HCT116 (cell line): ENCODE measurements at regions of chr20 and their contacts with region 1.

Region 1: GRCh38 chr20:59912609-59913008 is 20.8 kb downstream of the SYCP2 start:
- DNase-seq: no peak
- ATAC-seq: no peak
- H3K4me3 ChIP-seq: no peak overlapping the region
- H3K27ac ChIP-seq: no peak overlapping the region
- H3K4me1 ChIP-seq: no peaks in the 10 kb centered on the region
- H3K27me3 ChIP-seq: peaks cover 34% of the 10 kb centered on the region
- CTCF ChIP-seq: no peak
- POLR2A ChIP-seq: no peak
- RAD21 ChIP-seq: no peak

Region 2: GRCh38 chr20:59873409-59873808 is 39.2 kb before region 1 on chr20:
- CTCF ChIA-PET with region 1: no interaction called
- POLR2A ChIA-PET with region 1: no interaction called
- RAD21 ChIA-PET with region 1: no interaction called
- intact Hi-C with region 1: no loop called
- DNase-seq: no peak
- ATAC-seq: no peak
- H3K4me3 ChIP-seq: no peak overlapping the region
- H3K27ac ChIP-seq: no peak overlapping the region
- H3K4me1 ChIP-seq: no peaks in the 10 kb centered on the region
- H3K27me3 ChIP-seq: peaks cover 11% of the 10 kb centered on the region
- CTCF ChIP-seq: no peak
- POLR2A ChIP-seq: no peak
- RAD21 ChIP-seq: no peak

Region 3: DNA sequence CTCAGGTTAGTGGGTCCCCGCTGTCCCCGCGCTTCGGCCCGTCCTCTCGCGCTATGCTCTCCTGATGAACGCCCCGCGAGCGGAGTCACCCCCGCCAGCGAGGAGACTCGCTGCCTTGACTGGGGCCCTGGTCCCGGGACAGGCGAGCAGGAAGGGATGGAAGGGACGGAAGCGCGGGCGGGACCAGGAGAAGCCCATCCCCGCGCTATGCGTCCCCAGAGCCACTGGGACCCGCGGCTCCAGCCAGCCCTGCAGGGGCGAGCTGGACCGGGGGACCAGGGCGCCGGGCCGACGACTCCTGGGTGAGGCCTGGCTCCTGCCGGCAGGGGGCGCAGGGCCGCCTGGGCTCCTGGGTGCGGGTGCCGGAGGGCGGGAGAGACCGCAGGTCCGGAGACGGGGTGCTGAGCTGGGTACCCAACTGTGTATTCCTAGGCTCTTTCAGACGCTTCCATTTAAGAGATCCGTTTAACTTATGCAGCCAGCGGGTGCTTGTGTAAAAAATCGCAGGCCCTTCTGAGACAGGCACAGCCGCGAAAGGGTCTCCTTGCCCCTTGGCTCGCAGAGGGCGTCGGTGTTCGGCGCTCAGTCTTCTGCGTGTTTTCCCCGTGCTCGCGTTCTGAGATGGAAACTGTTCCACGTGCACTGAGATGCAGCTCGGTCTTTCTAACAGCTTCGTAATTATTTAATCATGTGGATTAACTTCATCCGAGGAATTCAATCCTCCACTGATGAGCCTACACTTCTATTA is 21.4 kb after region 1 on chr20:
- CTCF ChIA-PET with region 1: interaction called, 14 read pairs
- POLR2A ChIA-PET with region 1: no interaction called
- RAD21 ChIA-PET with region 1: no interaction called
- intact Hi-C with region 1: no loop called
- DNase-seq: peak; percentile 15
- ATAC-seq: peak; percentile 100
- H3K4me3 ChIP-seq: peak overlapping the region in 1 of 2 experiments; percentile 18; a peak in 1 of 4 replicates
- H3K27ac ChIP-seq: no peak overlapping the region
- H3K4me1 ChIP-seq: peaks cover 2 to 9% of the 10 kb centered on the region in 2 experiments; a peak in 3 of 4 replicates
- H3K27me3 ChIP-seq: no peaks in the 10 kb centered on the region; the same call in 1 of the 2 replicates
- CTCF ChIP-seq: peak; percentile 25 to 97 (median 92); a peak in 5 of 6 replicates
- POLR2A ChIP-seq: no peak
- RAD21 ChIP-seq: peak; percentile 31; the same call in 1 of the 2 replicates

Region 4: GRCh38 chr20:60050158-60050947 is 137.7 kb after region 1 on chr20:
- CTCF ChIA-PET with region 1: no interaction called
- POLR2A ChIA-PET with region 1: no interaction called
- RAD21 ChIA-PET with region 1: no interaction called
- intact Hi-C with region 1: no loop called
- DNase-seq: peak; percentile 26
- ATAC-seq: peak; percentile 96
- H3K4me3 ChIP-seq: no peak overlapping the region
- H3K27ac ChIP-seq: no peak overlapping the region
- H3K4me1 ChIP-seq: no peaks in the 10 kb centered on the region
- H3K27me3 ChIP-seq: peaks cover 27% of the 10 kb centered on the region
- CTCF ChIP-seq: peak; percentile 66 to 74 (median 71); a peak in 5 of 6 replicates
- POLR2A ChIP-seq: no peak
- RAD21 ChIP-seq: peak; percentile 60